Breast epithelium (tissue), 4 donors: ENCODE measurements at regions of chr21 and their contacts with region 1.

Region 1: DNA sequence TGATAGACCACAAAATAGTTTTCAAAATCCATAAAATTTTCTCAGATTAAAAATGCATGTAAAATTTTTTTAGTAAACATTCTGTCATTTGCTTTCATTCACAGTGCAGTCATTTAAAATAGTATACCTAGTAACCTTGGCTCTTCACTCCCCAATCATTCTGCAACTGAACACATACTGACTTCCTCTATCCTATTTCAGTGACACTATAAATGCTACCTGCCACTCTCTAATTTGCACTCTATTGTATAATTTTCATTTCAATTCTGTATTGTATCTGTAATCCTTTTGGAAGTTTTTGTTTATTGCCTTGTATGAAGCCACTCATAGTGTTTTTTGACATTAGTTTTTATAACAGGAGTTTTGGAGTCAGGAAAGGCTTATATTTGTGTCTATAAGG is 1029.1 kb upstream of the NCAM2 start:
- DNase-seq: no peak
- H3K4me3 ChIP-seq: no peak overlapping the region
- H3K27ac ChIP-seq: no peak overlapping the region
- H3K4me1 ChIP-seq: no peaks in the 10 kb centered on the region
- H3K27me3 ChIP-seq: no peaks in the 10 kb centered on the region
- CTCF ChIP-seq: no peak
- POLR2A ChIP-seq: no peak

Region 2: GRCh38 chr21:19482781-19483180 is 486.4 kb before region 1 on chr21:
- intact Hi-C with region 1: no loop called
- DNase-seq: no peak
- H3K4me3 ChIP-seq: no peak overlapping the region
- H3K27ac ChIP-seq: no peak overlapping the region
- H3K4me1 ChIP-seq: no peaks in the 10 kb centered on the region
- H3K27me3 ChIP-seq: no peaks in the 10 kb centered on the region
- CTCF ChIP-seq: no peak
- POLR2A ChIP-seq: no peak

Region 3: DNA sequence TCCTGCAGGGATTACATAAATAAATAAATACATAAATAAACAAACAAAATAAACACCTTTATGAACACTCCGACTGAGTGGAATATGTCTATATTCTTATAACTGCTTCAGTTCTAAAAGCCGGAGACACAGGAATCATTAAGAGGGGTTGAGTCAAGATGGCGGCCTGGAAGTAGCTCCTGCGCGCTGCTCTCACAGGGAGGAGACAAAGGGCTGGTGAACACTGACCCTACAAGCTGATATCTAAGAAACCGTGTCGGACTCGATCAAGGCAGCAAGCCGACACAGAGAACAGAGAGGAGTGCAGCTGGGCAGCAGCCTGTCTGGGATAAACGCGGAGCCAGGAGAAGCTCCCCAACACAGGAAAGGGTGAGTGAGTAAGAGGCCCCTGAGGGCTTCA is 69.5 kb before region 1 on chr21:
- intact Hi-C with region 1: loop called (anchors 5 kb)
- DNase-seq: no peak
- H3K4me3 ChIP-seq: no peak overlapping the region
- H3K27ac ChIP-seq: no peak overlapping the region
- H3K4me1 ChIP-seq: no peaks in the 10 kb centered on the region
- H3K27me3 ChIP-seq: no peaks in the 10 kb centered on the region
- CTCF ChIP-seq: no peak
- POLR2A ChIP-seq: no peak